ENCODE measurements at regions of chr15 and their contacts with region 1.

Region 1: GRCh38 chr15:91456251-91456738 is 356.2 kb downstream of the SV2B start:
- DNase-seq: peak; percentile 100
- H3K4me3 ChIP-seq: no peak overlapping the region
- H3K27ac ChIP-seq: peak overlapping the region; percentile 92
- H3K4me1 ChIP-seq: peaks cover 18% of the 10 kb centered on the region
- H3K27me3 ChIP-seq: no peaks in the 10 kb centered on the region
- CTCF ChIP-seq: no peak

Region 2: DNA sequence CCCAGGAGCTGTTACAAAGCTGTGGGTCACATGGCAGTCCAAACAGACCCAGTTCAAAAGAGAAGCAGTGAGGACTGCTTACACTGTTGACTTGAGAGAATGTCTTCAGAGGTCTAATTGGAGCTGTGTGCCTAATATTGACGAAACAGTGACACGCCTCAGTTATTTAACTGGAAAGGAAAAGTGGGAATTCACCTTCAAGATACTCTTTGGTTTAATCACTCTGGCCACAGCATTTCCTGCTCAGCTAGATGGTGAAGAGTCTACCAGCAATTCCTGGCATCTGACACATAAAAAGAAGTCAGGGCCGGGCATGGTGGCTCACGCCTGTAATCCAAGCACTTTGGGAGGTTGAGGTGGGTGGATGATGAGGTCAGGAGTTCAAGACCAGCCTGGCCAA is 29.9 kb before region 1 on chr15:
- CTCF ChIA-PET with region 1: no interaction called
- dilution Hi-C with region 1: no loop called
- in situ Hi-C with region 1: no loop called
- intact Hi-C with region 1: loop called (anchors 2 kb)
- DNase-seq: peak; percentile 94
- H3K4me3 ChIP-seq: no peak overlapping the region
- H3K27ac ChIP-seq: peak overlapping the region; percentile 43
- H3K4me1 ChIP-seq: no peaks in the 10 kb centered on the region
- H3K27me3 ChIP-seq: no peaks in the 10 kb centered on the region
- CTCF ChIP-seq: no peak

Region 3: GRCh38 chr15:91508633-91509032 is 52.3 kb after region 1 on chr15:
- CTCF ChIA-PET with region 1: no interaction called
- dilution Hi-C with region 1: no loop called
- in situ Hi-C with region 1: no loop called
- intact Hi-C with region 1: loop called (anchors 2 kb)
- DNase-seq: peak; percentile 68
- H3K4me3 ChIP-seq: no peak overlapping the region
- H3K27ac ChIP-seq: no peak overlapping the region
- H3K4me1 ChIP-seq: no peaks in the 10 kb centered on the region
- H3K27me3 ChIP-seq: no peaks in the 10 kb centered on the region
- CTCF ChIP-seq: no peak